Prostate gland (tissue), 2 donors: ENCODE measurements at regions of chr17 and their contacts with region 1.

Region 1: DNA sequence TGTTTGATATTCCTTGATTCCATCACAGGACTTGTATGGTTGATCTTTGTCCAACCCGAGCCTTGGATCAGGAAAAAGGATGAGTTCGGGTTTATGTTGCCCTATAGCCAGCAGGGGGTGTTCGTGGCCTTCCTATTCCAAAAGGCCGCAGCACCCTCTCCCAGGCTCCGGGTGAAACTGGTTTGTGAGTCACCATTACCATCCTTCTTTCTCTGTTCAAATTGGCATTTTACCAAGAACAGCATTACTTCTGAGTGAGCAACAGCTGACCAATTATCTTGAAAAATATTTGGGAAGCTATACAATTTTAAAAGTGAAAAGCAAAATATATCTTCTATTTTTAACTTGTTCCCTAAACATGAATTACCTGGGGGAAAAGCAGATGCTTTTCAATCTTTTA is 24.3 kb upstream of the KRT20 start:
- DNase-seq: peak; percentile 84
- H3K4me3 ChIP-seq: no peak overlapping the region
- H3K27ac ChIP-seq: peak overlapping the region; percentile 72 to 81
- H3K4me1 ChIP-seq: no peaks in the 10 kb centered on the region
- H3K27me3 ChIP-seq: no peaks in the 10 kb centered on the region
- CTCF ChIP-seq: peak; percentile 49 to 93 (median 82)
- POLR2A ChIP-seq: no peak

Region 2: DNA sequence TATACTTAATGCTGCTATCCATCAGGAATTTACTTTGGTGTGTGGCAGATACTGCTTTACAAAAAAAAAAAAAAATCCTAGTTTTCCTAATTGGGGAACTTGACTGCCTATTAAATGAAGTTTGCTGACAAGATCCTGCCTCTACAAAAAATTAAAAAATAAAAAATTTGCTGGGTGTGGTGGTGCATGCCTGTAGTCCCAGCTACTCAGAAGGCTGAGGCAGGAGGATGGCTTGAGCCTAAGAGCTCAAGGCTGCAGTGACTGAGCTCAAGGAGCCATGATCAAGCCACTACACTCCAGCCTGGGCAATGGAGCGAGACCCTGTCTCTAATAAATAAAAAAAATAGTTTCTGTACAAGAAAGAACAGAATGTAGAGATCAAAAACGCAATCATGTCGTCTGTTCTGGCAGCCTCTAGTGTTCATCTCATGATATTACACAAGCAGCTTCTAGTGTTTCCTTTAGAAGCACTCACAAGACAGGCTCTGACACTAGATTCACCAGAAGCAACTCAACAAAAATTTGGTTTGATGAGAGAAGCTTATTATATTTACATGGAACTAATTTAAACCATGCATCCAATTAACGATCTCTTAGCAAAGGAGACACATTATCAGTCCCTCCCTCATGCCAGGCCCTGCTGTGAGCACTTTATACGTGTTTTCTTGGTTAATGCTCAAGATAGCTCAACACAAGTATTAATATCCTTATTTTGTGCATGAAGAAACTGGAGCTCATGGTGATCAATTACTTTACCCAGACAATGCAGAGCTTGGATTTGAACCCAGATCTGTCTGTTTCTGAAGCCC is 412.9 kb after region 1 on chr17:
- intact Hi-C with region 1: loop called (anchors 2 kb)
- DNase-seq: peak; percentile 43
- H3K4me3 ChIP-seq: no peak overlapping the region
- H3K27ac ChIP-seq: no peak overlapping the region
- H3K4me1 ChIP-seq: no peaks in the 10 kb centered on the region
- H3K27me3 ChIP-seq: no peaks in the 10 kb centered on the region
- CTCF ChIP-seq: peak; percentile 41 to 87 (median 68)
- POLR2A ChIP-seq: no peak

Region 3: GRCh38 chr17:41548844-41549595 is 639.7 kb after region 1 on chr17:
- intact Hi-C with region 1: loop called (anchors 1 kb)
- DNase-seq: peak; percentile 83
- H3K4me3 ChIP-seq: peak overlapping the region; percentile 2 to 5
- H3K27ac ChIP-seq: peak overlapping the region; percentile 63 to 77
- H3K4me1 ChIP-seq: peaks cover 8% of the 10 kb centered on the region
- H3K27me3 ChIP-seq: no peaks in the 10 kb centered on the region
- CTCF ChIP-seq: peak; percentile 61 to 91 (median 82)
- POLR2A ChIP-seq: peak; percentile 35

Region 4: DNA sequence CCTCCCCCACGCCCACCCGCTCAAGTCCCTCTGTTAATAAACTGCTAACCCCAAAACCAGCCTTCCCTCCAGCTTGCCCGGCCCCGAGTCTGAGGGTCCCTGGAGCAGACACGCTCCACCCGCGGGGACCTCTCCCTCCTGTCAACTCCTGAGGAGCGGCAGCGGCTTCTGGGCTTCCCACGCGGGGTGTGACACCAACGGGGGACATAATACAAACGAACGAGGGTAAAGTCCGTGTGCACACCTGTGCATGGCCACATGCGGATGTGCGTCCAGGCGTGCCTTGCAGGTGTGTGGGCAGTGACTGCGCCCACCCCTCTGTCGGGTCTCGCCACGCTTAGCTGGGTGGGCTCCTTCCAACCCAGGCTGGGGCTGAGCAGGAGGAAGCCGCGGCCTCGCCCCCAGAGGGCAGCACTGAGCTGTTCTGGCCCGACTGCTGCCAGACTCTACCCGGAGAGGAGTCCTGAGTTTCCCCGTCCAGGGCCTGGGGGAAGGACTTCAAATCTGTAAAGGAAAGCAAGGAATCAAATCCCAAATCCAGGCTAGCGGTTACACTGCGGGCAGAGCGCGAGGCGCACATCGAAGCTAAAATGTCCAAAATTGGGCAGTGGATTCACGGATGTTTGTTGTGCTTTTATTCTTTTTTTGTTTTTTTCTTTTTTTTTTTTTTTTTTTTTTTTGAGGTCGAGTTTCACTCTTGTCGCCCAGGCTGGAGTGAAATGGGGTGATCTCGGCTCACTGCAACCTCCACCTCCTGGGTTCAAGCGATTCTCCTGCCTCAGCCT is 739.3 kb after region 1 on chr17:
- intact Hi-C with region 1: loop called (anchors 5 kb)
- DNase-seq: peak; percentile 86
- H3K4me3 ChIP-seq: peak overlapping the region; percentile 5 to 6
- H3K27ac ChIP-seq: peak overlapping the region; percentile 36 to 47
- H3K4me1 ChIP-seq: peaks cover 7% of the 10 kb centered on the region
- H3K27me3 ChIP-seq: no peaks in the 10 kb centered on the region
- CTCF ChIP-seq: peak; percentile 96 to 99 (median 98)
- POLR2A ChIP-seq: peak; percentile 39